ENCODE measurements at regions of chr1 and their contacts with region 1.

Region 1: GRCh38 chr1:218499011-218499691 is 154.0 kb downstream of the TGFB2 start:
- DNase-seq: peak; percentile 79
- ATAC-seq: peak; percentile 31
- H3K4me3 ChIP-seq: peak overlapping the region; percentile 52; the same call in 1 of the 2 replicates
- H3K27ac ChIP-seq: peak overlapping the region; percentile 77
- H3K4me1 ChIP-seq: peaks cover 6% of the 10 kb centered on the region
- H3K27me3 ChIP-seq: no peaks in the 10 kb centered on the region
- CTCF ChIP-seq: no peak
- POLR2A ChIP-seq: no peak; the same call in none of the 2 replicates
- RAD21 ChIP-seq: no peak; the same call in 1 of the 2 replicates

Region 2: GRCh38 chr1:218480137-218480536 is 19.0 kb before region 1 on chr1:
- CTCF ChIA-PET with region 1: no interaction called
- POLR2A ChIA-PET with region 1: no interaction called
- dilution Hi-C with region 1: no loop called
- in situ Hi-C with region 1: no loop called
- intact Hi-C with region 1: loop called (anchors 1 kb)
- DNase-seq: peak; percentile 97
- ATAC-seq: peak; percentile 64
- H3K4me3 ChIP-seq: no peak overlapping the region
- H3K27ac ChIP-seq: peak overlapping the region; percentile 78
- H3K4me1 ChIP-seq: peaks cover 16% of the 10 kb centered on the region
- H3K27me3 ChIP-seq: no peaks in the 10 kb centered on the region
- CTCF ChIP-seq: no peak
- POLR2A ChIP-seq: peak; percentile 45; the same call in 1 of the 2 replicates
- RAD21 ChIP-seq: no peak

Region 3: GRCh38 chr1:218510153-218510772 is 11.1 kb after region 1 on chr1:
- CTCF ChIA-PET with region 1: no interaction called
- POLR2A ChIA-PET with region 1: interaction called, 11 read pairs
- dilution Hi-C with region 1: no loop called
- in situ Hi-C with region 1: no loop called
- intact Hi-C with region 1: no loop called
- DNase-seq: no peak
- ATAC-seq: no peak
- H3K4me3 ChIP-seq: no peak overlapping the region
- H3K27ac ChIP-seq: no peak overlapping the region
- H3K4me1 ChIP-seq: no peaks in the 10 kb centered on the region
- H3K27me3 ChIP-seq: no peaks in the 10 kb centered on the region
- CTCF ChIP-seq: no peak
- POLR2A ChIP-seq: no peak
- RAD21 ChIP-seq: no peak

Region 4: DNA sequence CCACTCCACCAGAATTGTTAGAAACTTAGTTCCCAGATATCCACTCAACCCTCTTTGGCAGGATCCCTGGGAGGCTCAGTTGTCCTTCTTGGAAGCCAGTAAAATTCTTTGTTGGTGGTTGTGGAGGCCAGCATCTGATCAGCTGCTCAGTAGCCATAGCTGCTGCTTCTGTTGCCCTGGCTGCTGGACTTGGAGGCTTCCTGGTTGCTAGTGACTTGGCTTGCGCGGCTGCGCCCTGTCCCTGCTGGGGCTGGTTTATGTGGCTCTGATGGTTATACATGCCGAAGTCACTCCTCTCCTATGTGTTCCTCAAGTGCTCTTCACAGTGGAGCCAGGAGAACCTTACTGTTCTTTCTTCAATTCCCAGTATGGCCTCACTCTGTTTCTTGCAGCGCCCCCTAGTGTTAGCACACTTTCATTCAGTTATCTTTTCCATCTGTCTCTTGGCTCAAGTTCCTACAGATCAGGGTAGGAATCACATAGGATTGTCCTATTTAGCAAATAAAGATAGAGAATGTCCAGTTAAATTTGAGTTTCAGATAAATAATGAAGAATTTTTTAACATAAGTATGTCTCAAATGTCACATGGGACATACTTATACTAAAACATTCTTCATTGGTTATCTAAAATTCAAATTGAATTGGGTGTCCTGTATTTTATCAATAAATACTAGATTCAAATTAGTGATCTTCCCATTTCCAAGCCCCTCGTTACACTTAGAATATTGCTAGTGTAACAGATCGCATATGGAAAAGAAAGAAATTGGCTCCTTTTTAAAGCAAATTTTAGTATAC is 22.4 kb after region 1 on chr1:
- CTCF ChIA-PET with region 1: interaction called, 3 read pairs
- POLR2A ChIA-PET with region 1: no interaction called
- dilution Hi-C with region 1: no loop called
- in situ Hi-C with region 1: no loop called
- intact Hi-C with region 1: loop called (anchors 2 kb)
- DNase-seq: peak; percentile 21
- ATAC-seq: no peak
- H3K4me3 ChIP-seq: no peak overlapping the region
- H3K27ac ChIP-seq: no peak overlapping the region
- H3K4me1 ChIP-seq: peaks cover 3% of the 10 kb centered on the region; the same call in 1 of the 2 replicates
- H3K27me3 ChIP-seq: no peaks in the 10 kb centered on the region
- CTCF ChIP-seq: peak; percentile 48
- POLR2A ChIP-seq: no peak
- RAD21 ChIP-seq: peak; percentile 54

Region 5: DNA sequence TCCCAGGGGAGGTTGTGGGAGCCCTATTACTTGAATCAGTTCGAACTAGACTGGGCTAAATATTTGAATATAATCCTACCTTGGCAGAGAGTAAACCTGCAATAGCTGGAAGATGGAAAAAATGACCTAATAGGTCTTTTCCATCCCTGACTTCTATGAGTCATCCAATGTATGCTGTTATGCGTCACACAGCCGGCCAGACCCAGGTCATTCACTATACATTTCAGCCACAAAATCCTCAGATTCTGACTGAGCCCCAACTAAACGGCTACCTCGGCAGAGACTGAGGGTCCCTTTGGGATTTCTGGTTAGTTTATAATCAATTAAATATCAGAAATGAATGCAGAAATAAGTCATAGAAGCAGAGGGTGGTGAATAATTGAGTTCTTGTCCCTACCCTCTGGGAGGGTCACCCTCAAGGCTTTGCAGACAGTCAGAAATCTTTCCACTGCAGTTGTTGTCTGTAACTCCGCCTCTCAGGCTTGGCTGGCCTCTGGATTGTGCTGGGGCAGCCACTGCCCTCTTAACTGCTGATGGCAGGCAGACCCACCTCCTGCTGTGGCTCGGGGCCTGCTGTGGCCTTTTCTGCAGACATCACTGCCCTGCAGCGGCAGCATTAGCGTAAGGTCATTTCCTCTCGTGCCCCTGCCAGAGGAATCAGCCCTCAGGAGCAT is 86.5 kb after region 1 on chr1:
- CTCF ChIA-PET with region 1: no interaction called
- POLR2A ChIA-PET with region 1: no interaction called
- dilution Hi-C with region 1: no loop called
- in situ Hi-C with region 1: no loop called
- intact Hi-C with region 1: no loop called
- DNase-seq: peak; percentile 86
- ATAC-seq: peak; percentile 79
- H3K4me3 ChIP-seq: no peak overlapping the region
- H3K27ac ChIP-seq: peak overlapping the region; percentile 6
- H3K4me1 ChIP-seq: peaks cover 7% of the 10 kb centered on the region
- H3K27me3 ChIP-seq: no peaks in the 10 kb centered on the region
- CTCF ChIP-seq: no peak
- POLR2A ChIP-seq: no peak
- RAD21 ChIP-seq: no peak

Region 6: DNA sequence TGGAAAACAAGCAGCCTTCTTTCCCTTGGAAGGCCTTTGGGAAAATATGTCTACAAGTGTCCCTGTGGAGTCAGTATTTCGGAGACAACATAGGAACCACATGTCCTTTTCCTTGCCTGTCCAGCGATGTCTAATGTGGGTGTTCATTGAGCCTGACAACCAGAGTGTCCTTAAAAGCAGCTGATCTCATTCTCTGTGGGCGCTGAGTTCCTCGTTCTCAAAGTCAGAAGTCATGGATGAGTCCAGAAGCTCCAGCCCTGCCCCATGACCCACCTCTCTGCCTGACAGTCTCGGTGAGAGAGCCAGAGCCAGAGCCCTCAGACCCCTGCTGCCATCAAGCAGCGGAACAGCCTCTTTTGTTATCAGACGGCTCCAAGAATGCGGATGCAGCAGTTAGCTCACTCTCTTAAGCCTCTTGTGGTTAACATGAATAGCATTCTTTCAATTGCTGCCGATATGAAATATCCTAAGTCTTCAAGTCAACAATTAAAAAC is 175.2 kb after region 1 on chr1:
- CTCF ChIA-PET with region 1: interaction called, 3 read pairs
- POLR2A ChIA-PET with region 1: no interaction called
- dilution Hi-C with region 1: no loop called
- in situ Hi-C with region 1: no loop called
- intact Hi-C with region 1: loop called (anchors 10 kb)
- DNase-seq: peak; percentile 83
- ATAC-seq: peak; percentile 92
- H3K4me3 ChIP-seq: no peak overlapping the region
- H3K27ac ChIP-seq: peak overlapping the region; percentile 65
- H3K4me1 ChIP-seq: peaks cover 4% of the 10 kb centered on the region
- H3K27me3 ChIP-seq: no peaks in the 10 kb centered on the region
- CTCF ChIP-seq: no peak
- POLR2A ChIP-seq: no peak
- RAD21 ChIP-seq: no peak; the same call in 1 of the 2 replicates

Region 7: DNA sequence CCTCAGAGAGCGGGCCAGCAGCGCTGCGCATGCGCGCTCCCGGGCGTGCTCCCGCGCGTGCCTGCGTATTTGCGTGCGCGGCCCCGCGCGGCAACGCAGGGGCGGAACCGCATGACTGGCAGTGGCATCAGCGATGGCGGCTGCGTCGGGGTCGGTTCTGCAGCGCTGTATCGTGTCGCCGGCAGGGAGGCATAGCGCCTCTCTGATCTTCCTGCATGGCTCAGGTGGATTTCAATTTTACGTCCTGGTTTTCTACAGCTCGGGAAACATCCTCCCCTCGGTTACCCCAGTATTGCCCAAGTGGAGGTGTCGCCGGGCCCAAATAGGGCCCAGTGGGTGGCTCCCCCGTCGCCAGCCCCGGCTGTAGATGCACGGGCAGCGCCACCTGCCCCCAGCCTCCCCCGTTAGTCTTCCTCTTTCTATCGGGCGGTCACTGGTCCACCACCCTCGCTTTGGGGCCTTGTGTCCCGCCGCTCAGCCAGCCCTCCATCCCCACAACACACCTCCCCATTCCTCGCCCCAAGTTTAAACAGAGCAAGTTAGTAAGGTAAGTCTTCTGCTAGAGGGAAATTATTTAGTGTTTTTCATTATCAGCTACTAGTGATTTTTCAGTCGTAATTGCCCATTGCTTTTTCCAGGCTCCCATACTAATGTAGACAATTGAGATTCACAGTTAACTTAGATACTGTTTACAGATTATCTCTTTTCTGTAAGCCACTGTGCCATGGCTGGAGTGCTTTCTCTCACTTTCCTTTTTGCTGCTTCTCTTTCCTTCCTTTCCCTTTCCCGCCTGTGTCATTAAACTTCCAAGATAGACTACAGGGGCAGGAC is 674.8 kb after region 1 on chr1 and contains the start of gene LYPLAL1:
- CTCF ChIA-PET with region 1: no interaction called
- POLR2A ChIA-PET with region 1: no interaction called
- dilution Hi-C with region 1: no loop called
- in situ Hi-C with region 1: no loop called
- intact Hi-C with region 1: loop called (anchors 5 kb)
- DNase-seq: peak; percentile 89
- ATAC-seq: peak; percentile 93
- H3K4me3 ChIP-seq: peak within 1 kb of the TSS; percentile 59
- H3K27ac ChIP-seq: peak within 1 kb of the TSS; percentile 93
- H3K4me1 ChIP-seq: peaks cover 6% of the 10 kb centered on the region
- H3K27me3 ChIP-seq: no peaks in the 10 kb centered on the region
- CTCF ChIP-seq: no peak
- POLR2A ChIP-seq: peak; percentile 75
- RAD21 ChIP-seq: no peak
- total RNA-seq, gene LYPLAL1: 4.8 and 11.4 TPM in 2 replicates

Region 8: DNA sequence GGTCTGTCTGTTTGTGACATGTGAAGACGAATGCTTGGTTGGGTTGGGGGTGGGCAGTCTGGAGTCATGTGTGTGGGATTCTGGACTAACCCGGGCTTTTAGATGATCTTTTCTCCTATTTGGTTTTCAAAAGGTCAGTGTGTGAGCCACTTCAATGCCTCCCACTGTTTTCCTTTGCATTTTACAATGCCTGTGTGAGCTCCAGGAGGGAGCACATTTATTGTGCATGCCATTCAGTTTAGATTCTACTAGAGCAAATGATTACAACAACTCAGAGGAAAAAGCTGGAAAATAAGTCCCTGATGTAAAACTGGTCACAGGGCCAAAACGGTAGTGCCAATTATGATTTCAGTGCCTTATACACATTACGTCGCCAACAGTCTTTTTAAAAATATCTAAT is 765.4 kb after region 1 on chr1:
- CTCF ChIA-PET with region 1: no interaction called
- POLR2A ChIA-PET with region 1: no interaction called
- dilution Hi-C with region 1: no loop called
- in situ Hi-C with region 1: no loop called
- intact Hi-C with region 1: no loop called
- DNase-seq: no peak
- ATAC-seq: peak; percentile 48; the same call in 1 of the 2 replicates
- H3K4me3 ChIP-seq: no peak overlapping the region
- H3K27ac ChIP-seq: no peak overlapping the region
- H3K4me1 ChIP-seq: no peaks in the 10 kb centered on the region
- H3K27me3 ChIP-seq: no peaks in the 10 kb centered on the region
- CTCF ChIP-seq: no peak
- POLR2A ChIP-seq: no peak
- RAD21 ChIP-seq: no peak